ENCODE measurements at regions of chr4 and their contacts with region 1.

Region 1: GRCh38 chr4:77662396-77662795 is 56.8 kb downstream of the CXCL13 start:
- DNase-seq: no peak
- ATAC-seq: no peak
- H3K4me3 ChIP-seq: no peak overlapping the region
- H3K27ac ChIP-seq: no peak overlapping the region
- H3K4me1 ChIP-seq: no peaks in the 10 kb centered on the region
- H3K27me3 ChIP-seq: no peaks in the 10 kb centered on the region
- CTCF ChIP-seq: no peak

Region 2: GRCh38 chr4:76634239-76634638 is 1028.2 kb before region 1 on chr4:
- CTCF ChIA-PET with region 1: interaction called, 12 read pairs
- POLR2A ChIA-PET with region 1: no interaction called
- in situ Hi-C with region 1: no loop called
- intact Hi-C with region 1: no loop called
- DNase-seq: no peak
- ATAC-seq: peak; percentile 60; the same call in 1 of the 2 replicates
- H3K4me3 ChIP-seq: no peak overlapping the region
- H3K27ac ChIP-seq: peak overlapping the region; percentile 54; the same call in 1 of the 2 replicates
- H3K4me1 ChIP-seq: no peaks in the 10 kb centered on the region; the same call in 1 of the 2 replicates
- H3K27me3 ChIP-seq: no peaks in the 10 kb centered on the region
- CTCF ChIP-seq: no peak

Region 3: GRCh38 chr4:77681792-77682191 is 19.4 kb after region 1 on chr4:
- CTCF ChIA-PET with region 1: no interaction called
- POLR2A ChIA-PET with region 1: no interaction called
- in situ Hi-C with region 1: no loop called
- intact Hi-C with region 1: no loop called
- DNase-seq: no peak
- ATAC-seq: no peak
- H3K4me3 ChIP-seq: no peak overlapping the region
- H3K27ac ChIP-seq: no peak overlapping the region
- H3K4me1 ChIP-seq: no peaks in the 10 kb centered on the region
- H3K27me3 ChIP-seq: no peaks in the 10 kb centered on the region
- CTCF ChIP-seq: no peak

Region 4: DNA sequence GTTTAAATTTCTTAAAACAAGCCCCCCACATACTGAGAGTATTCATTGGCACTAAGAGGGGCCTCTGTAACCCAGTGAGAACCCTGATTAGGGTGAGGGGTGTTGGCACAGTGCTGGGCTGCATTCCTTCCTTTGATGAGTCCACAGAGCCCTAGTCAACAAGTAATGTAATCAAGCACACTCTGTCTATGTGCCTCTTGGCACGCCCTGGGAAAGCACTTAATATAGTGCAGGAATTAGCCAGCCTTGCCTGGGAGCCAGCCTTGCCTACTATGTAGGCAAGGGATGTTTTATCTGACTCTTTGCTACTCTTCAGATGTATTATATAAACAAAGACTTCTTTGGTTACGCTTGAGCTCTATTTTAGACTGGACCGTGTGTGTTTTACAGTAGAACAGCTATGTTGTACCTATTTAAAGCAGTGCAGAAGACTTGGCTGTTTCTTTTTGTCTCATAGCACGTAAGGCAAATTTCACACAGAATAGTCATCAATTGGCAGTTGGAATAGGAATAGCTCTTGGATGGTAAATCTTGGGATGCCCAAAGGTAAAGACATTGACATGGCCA is 459.0 kb after region 1 on chr4:
- CTCF ChIA-PET with region 1: no interaction called
- POLR2A ChIA-PET with region 1: no interaction called
- in situ Hi-C with region 1: no loop called
- intact Hi-C with region 1: no loop called
- DNase-seq: no peak
- ATAC-seq: no peak
- H3K4me3 ChIP-seq: no peak overlapping the region
- H3K27ac ChIP-seq: no peak overlapping the region
- H3K4me1 ChIP-seq: no peaks in the 10 kb centered on the region
- H3K27me3 ChIP-seq: no peaks in the 10 kb centered on the region
- CTCF ChIP-seq: no peak